ENCODE measurements at regions of chr9 and their contacts with region 1.

Region 1: DNA sequence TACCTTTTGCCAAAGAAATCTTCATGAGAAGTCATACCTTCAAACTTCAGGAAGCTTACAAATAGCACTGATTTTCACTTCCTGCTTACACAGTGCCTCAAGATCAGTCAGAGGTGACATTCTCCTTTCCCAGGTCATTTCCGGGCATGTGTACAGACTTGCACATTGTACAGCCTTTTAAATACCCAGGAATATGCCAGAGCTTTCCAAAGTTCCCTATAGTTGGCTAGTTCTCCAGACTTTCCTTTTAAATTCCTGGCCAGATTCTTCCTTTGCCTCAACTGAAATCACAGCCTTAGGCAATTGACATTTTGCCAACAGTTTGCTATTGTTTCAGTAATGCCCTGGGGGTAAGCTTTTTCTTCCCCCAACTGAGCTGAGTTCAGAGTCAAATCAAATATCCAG is 47.2 kb downstream of the RFX3 start:
- DNase-seq: peak; percentile 74
- ATAC-seq: peak; percentile 60
- H3K4me3 ChIP-seq: peak overlapping the region; percentile 48; the same call in 1 of the 2 replicates
- H3K27ac ChIP-seq: peak overlapping the region; percentile 97
- H3K4me1 ChIP-seq: peaks cover 54% of the 10 kb centered on the region
- H3K27me3 ChIP-seq: no peaks in the 10 kb centered on the region
- CTCF ChIP-seq: no peak
- EP300 ChIP-seq: peak in 1 of 2 experiments; percentile 10; a peak in 1 of 4 replicates
- POLR2A ChIP-seq: no peak
- RAD21 ChIP-seq: no peak

Region 2: DNA sequence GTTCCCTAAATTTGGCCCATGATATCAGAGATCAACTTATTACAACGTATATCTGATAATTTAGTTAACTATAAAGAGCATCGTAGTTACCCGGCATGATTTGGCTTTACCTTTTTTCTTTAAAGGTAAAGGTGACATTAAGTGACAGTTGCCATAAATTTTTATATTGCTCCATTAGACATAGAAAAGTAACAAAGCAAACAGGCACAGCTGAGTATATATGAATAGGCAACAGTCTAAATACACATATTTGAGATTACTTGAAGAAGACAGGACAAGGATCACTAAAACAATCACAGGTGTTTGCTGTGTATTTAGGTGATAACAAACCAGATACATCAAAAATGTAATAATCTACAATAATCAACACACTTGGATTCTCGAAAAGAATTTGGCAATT is 12.4 kb after region 1 on chr9:
- CTCF ChIA-PET with region 1: interaction called, 11 read pairs
- POLR2A ChIA-PET with region 1: interaction called, 6 read pairs
- RAD21 ChIA-PET with region 1: interaction called, 14 read pairs
- SMC1A ChIA-PET with region 1: interaction called, 18 read pairs
- in situ Hi-C with region 1: no loop called
- intact Hi-C with region 1: no loop called
- DNase-seq: no peak
- ATAC-seq: no peak
- H3K4me3 ChIP-seq: no peak overlapping the region
- H3K27ac ChIP-seq: no peak overlapping the region
- H3K4me1 ChIP-seq: no peaks in the 10 kb centered on the region
- H3K27me3 ChIP-seq: no peaks in the 10 kb centered on the region
- CTCF ChIP-seq: no peak
- EP300 ChIP-seq: no peak
- POLR2A ChIP-seq: no peak
- RAD21 ChIP-seq: no peak

Region 3: DNA sequence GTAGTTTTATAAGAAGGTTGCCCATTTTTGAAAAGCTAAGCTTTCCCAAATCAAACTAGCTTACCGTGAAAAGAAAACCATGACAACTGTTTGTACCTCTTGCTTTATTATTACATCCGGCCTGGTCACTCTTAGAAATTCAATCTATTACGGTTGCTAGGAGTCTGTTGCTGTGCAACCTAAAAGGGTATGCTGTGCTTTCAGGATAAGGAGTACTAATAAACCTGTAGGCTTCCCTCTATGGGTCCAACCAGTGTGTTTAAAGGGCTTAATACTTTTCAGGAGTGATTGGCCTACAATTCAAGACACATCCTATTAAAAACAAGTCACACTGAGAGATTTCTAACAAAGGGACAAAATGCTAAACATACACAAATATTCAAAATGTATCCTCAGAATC is 20.1 kb after region 1 on chr9:
- CTCF ChIA-PET with region 1: interaction called, 11 read pairs
- POLR2A ChIA-PET with region 1: interaction called, 7 read pairs
- RAD21 ChIA-PET with region 1: interaction called, 14 read pairs
- SMC1A ChIA-PET with region 1: interaction called, 18 read pairs
- in situ Hi-C with region 1: no loop called
- intact Hi-C with region 1: no loop called
- DNase-seq: no peak
- ATAC-seq: peak; percentile 53
- H3K4me3 ChIP-seq: no peak overlapping the region
- H3K27ac ChIP-seq: no peak overlapping the region
- H3K4me1 ChIP-seq: peaks cover 2% of the 10 kb centered on the region; the same call in 1 of the 2 replicates
- H3K27me3 ChIP-seq: no peaks in the 10 kb centered on the region
- CTCF ChIP-seq: no peak
- EP300 ChIP-seq: no peak
- POLR2A ChIP-seq: no peak
- RAD21 ChIP-seq: no peak

Region 4: GRCh38 chr9:3508521-3509291 is 30.2 kb after region 1 on chr9:
- CTCF ChIA-PET with region 1: interaction called, 11 read pairs
- POLR2A ChIA-PET with region 1: interaction called, 7 read pairs
- RAD21 ChIA-PET with region 1: interaction called, 49 read pairs
- SMC1A ChIA-PET with region 1: interaction called, 74 read pairs
- in situ Hi-C with region 1: no loop called
- intact Hi-C with region 1: loop called (anchors 2 kb)
- DNase-seq: no peak
- ATAC-seq: peak; percentile 74
- H3K4me3 ChIP-seq: peak overlapping the region; percentile 43
- H3K27ac ChIP-seq: peak overlapping the region; percentile 61
- H3K4me1 ChIP-seq: peaks cover 13% of the 10 kb centered on the region
- H3K27me3 ChIP-seq: no peaks in the 10 kb centered on the region
- CTCF ChIP-seq: no peak
- EP300 ChIP-seq: no peak
- POLR2A ChIP-seq: no peak
- RAD21 ChIP-seq: no peak

Region 5: GRCh38 chr9:3516667-3517330 is 38.2 kb after region 1 on chr9:
- CTCF ChIA-PET with region 1: interaction called, 14 read pairs
- POLR2A ChIA-PET with region 1: interaction called, 5 read pairs
- RAD21 ChIA-PET with region 1: interaction called, 180 read pairs
- SMC1A ChIA-PET with region 1: interaction called, 43 read pairs
- in situ Hi-C with region 1: loop called (anchors 5 kb)
- intact Hi-C with region 1: no loop called
- DNase-seq: no peak
- ATAC-seq: peak; percentile 5; the same call in 2 of the 3 replicates
- H3K4me3 ChIP-seq: no peak overlapping the region
- H3K27ac ChIP-seq: no peak overlapping the region
- H3K4me1 ChIP-seq: peaks cover under 1% of the 10 kb centered on the region; the same call in 1 of the 2 replicates
- H3K27me3 ChIP-seq: no peaks in the 10 kb centered on the region
- CTCF ChIP-seq: no peak
- EP300 ChIP-seq: no peak
- POLR2A ChIP-seq: no peak
- RAD21 ChIP-seq: no peak

Region 6: DNA sequence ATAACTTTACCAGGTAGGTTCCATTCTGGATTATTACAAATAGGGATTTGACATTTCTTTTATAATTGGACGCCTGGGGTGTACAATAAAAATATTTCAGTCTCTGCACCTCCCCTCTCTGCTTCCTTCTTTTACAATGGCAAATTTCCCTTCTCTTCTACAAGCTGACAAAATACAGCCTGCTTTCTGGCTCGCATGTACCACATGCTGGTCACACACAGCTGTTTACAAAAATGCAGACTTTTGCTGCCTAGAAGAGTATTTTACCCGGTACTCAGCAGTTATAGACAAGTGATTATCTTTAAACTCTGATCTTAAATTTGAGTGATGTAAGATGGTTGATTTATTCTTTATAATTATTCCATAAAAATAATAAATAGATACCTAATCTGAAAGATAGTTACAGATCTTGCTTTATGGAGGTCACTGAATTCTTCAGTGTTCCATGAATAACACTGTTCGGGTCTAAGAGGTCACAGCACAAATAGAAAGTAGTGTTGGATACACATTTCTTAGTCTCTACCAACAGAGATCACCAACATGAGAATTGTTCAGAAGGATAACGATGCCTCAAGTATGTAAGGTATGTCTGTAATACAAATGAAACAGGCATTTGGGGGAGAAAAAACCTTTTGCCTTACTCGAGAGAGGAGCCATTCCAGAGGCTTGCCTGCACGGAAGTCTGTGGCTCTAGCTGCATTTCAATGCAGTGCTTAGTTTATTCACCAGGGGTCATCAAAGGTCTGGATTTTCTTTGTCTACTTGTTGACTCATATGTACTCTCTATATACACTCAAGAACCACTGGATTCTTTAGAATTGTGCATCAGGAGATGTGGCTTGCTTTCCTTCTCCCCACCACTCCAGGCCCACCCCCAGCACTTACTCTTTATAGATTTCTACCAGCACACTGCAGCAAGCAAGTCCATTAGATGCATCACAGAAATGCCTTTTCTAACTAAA is 253.8 kb after region 1 on chr9:
- CTCF ChIA-PET with region 1: interaction called, 3 read pairs
- POLR2A ChIA-PET with region 1: no interaction called
- RAD21 ChIA-PET with region 1: no interaction called
- SMC1A ChIA-PET with region 1: interaction called, 3 read pairs
- in situ Hi-C with region 1: loop called (anchors 10 kb)
- intact Hi-C with region 1: no loop called
- DNase-seq: peak; percentile 64
- ATAC-seq: peak; percentile 88
- H3K4me3 ChIP-seq: no peak overlapping the region
- H3K27ac ChIP-seq: no peak overlapping the region
- H3K4me1 ChIP-seq: peaks cover 22% of the 10 kb centered on the region
- H3K27me3 ChIP-seq: no peaks in the 10 kb centered on the region
- CTCF ChIP-seq: peak; percentile 60 to 83 (median 65)
- EP300 ChIP-seq: no peak
- POLR2A ChIP-seq: no peak
- RAD21 ChIP-seq: peak; percentile 83

Measured in GM12878 (cell line).